Activated T-helper 2 cell treated with anti-CD3 and anti-CD28 coated beads, Interferon-gamma antibody, Interleukin-2, Interleukin-4, amounts not matched to agents 10 μg/mL and 5 μg/mL and 100 μg/mL, durations not matched to agents 14 hours and 24 hours and 36 hours (primary cell): ENCODE measurements at regions of chr3 and their contacts with region 1.

Region 1: DNA sequence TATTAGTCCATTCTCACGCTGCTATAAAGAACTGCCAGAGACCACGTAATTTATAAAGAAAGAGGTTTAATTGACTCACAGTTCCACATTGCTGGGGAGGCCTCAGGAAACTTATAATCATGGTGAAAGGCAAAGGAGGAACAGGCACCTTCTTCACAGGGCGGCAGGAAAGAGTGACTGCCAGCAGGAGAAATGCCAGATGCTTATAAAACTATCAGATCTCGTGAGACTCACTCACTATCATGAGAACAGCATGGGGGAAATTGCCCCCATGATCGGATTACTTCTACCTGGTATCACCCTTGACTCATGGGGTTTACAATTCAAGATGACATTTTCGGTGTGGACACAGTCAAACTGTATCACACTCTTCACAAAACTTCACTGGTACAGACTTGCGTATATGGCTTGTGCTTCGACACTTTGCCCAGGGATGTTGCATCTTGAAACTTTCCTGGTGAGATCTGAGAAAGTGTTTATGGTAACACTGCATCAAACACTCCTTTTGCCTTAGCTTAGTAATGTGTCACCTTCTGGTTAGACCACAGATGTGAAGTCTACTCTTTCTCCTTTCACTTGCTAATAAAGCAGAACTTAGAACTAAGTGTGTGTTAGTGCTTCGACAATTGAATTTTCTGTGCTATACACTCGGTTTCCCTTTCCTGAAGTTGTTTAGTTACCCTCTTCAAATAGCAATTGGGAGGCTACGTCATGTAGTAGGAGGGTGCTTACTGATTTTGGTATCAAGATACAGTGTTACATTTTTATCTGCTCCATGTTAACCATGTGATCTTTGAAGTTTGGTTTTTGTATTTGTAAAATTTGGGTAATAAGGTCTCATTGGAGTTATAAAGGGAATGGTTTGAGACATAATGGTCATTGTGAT is 185.7 kb downstream of the LPP start:
- DNase-seq: peak; percentile 19
- H3K4me3 Mint-ChIP-seq: peak overlapping the region; percentile 66
- H3K27ac Mint-ChIP-seq: peak overlapping the region; percentile 89
- H3K4me1 Mint-ChIP-seq: peaks cover 29% of the 10 kb centered on the region
- H3K27me3 Mint-ChIP-seq: no peaks in the 10 kb centered on the region

Region 2: DNA sequence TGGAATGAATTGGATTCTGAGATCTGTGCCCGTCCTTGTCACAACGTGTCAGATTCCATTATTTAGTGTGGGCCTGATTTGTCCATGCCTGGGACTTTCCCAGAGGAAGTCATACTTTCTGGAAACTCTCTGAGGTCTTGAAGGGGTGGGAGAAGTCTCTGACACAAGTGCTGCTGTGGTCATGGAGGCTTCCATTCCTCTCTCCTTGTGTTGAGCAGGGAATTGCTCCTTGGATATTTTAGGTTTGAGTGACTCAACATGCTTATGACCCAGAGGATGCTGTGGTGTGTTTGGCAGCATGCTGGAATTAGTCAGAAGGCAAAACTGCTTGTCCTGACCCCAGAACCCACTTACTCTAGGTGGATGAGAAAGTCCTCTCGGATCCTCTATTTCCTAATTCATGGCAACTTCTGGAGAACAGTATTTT is 53.6 kb before region 1 on chr3:
- intact Hi-C with region 1: loop called (anchors 1 kb)
- DNase-seq: no peak
- H3K4me3 Mint-ChIP-seq: no peak overlapping the region
- H3K27ac Mint-ChIP-seq: peak overlapping the region; percentile 5
- H3K4me1 Mint-ChIP-seq: peaks cover 52% of the 10 kb centered on the region
- H3K27me3 Mint-ChIP-seq: no peaks in the 10 kb centered on the region

Region 3: GRCh38 chr3:188309437-188310269 is 30.0 kb before region 1 on chr3:
- intact Hi-C with region 1: loop called (anchors 1 kb)
- DNase-seq: peak; percentile 38
- H3K4me3 Mint-ChIP-seq: peak overlapping the region; percentile 48
- H3K27ac Mint-ChIP-seq: peak overlapping the region; percentile 79
- H3K4me1 Mint-ChIP-seq: peaks cover 25% of the 10 kb centered on the region
- H3K27me3 Mint-ChIP-seq: peaks cover under 1% of the 10 kb centered on the region

Region 4: GRCh38 chr3:188389711-188390342 is 50.2 kb after region 1 on chr3:
- intact Hi-C with region 1: loop called (anchors 2 kb)
- DNase-seq: peak; percentile 30
- H3K4me3 Mint-ChIP-seq: no peak overlapping the region
- H3K27ac Mint-ChIP-seq: peak overlapping the region; percentile 75
- H3K4me1 Mint-ChIP-seq: peaks cover 33% of the 10 kb centered on the region
- H3K27me3 Mint-ChIP-seq: no peaks in the 10 kb centered on the region

Region 5: DNA sequence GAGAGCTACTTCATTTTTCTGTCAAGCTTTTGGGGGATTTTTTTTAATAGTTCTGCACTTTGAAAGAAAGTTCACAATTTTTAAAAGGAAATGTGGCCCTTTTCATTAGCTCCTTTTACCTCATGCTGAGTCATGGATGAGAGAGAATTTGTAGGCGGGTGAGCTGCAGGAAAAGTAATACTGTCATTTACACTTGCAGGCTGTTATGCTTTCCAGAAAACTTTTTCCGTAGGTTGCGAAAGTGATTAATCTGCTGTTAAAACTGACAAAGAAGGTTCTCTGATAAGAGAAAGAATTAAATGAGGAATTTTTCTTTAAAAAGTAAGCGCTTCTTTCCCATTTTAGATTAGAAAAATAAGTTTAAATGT is 244.5 kb after region 1 on chr3:
- intact Hi-C with region 1: loop called (anchors 10 kb)
- DNase-seq: no peak
- H3K4me3 Mint-ChIP-seq: peak overlapping the region; percentile 13
- H3K27ac Mint-ChIP-seq: peak overlapping the region; percentile 86
- H3K4me1 Mint-ChIP-seq: peaks cover 30% of the 10 kb centered on the region
- H3K27me3 Mint-ChIP-seq: no peaks in the 10 kb centered on the region